ENCODE measurements at regions of chr15 and their contacts with region 1.

Region 1: DNA sequence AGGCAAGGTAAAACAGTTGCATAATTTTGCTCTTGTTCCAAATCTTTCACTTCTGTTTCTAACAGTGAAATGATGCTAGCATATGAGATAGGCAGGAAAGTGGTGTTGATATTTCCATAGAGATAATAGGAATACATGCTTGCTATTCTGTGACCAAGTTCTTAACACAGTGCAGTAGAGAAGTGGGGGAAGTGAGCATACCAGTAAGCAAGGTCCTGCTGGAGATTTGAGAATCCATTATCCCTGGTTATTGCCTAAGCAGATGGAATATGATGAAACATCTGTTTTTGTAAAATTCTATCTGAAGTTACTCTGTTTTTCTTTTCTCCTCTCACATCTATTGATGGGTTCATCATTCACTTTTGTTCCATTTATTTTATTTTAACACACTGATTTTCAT is 28.7 kb downstream of the USP8 start:
- DNase-seq: no peak
- H3K4me3 ChIP-seq: no peak overlapping the region
- H3K27ac ChIP-seq: no peak overlapping the region
- H3K4me1 ChIP-seq: no peaks in the 10 kb centered on the region
- H3K27me3 ChIP-seq: no peaks in the 10 kb centered on the region
- CTCF ChIP-seq: no peak
- POLR2A ChIP-seq: no peak

Region 2: GRCh38 chr15:50340416-50340815 is 112.5 kb before region 1 on chr15:
- intact Hi-C with region 1: loop called (anchors 5 kb)
- DNase-seq: no peak
- H3K4me3 ChIP-seq: no peak overlapping the region
- H3K27ac ChIP-seq: no peak overlapping the region
- H3K4me1 ChIP-seq: no peaks in the 10 kb centered on the region
- H3K27me3 ChIP-seq: no peaks in the 10 kb centered on the region
- CTCF ChIP-seq: no peak
- POLR2A ChIP-seq: no peak

Region 3: DNA sequence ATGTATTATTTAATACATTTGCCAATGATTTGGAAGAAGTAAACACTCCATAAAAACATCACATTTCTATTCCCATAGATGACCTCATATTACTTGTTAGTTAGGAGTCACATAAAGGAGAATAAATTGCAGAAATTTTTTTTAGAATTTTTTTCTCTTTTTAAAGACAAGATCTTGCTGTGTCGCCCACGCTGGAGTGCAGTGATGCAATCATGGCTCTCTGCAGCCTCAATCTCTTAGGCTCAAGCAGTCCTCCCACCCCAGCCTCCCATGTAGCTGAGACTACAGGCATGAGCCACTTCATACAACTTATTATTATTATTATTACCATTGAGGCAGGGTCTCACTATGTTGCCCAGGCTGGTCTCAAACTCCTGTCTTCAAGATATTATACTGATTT is 41.1 kb before region 1 on chr15:
- intact Hi-C with region 1: no loop called
- DNase-seq: no peak
- H3K4me3 ChIP-seq: no peak overlapping the region
- H3K27ac ChIP-seq: no peak overlapping the region
- H3K4me1 ChIP-seq: no peaks in the 10 kb centered on the region
- H3K27me3 ChIP-seq: no peaks in the 10 kb centered on the region
- CTCF ChIP-seq: no peak
- POLR2A ChIP-seq: no peak

Region 4: DNA sequence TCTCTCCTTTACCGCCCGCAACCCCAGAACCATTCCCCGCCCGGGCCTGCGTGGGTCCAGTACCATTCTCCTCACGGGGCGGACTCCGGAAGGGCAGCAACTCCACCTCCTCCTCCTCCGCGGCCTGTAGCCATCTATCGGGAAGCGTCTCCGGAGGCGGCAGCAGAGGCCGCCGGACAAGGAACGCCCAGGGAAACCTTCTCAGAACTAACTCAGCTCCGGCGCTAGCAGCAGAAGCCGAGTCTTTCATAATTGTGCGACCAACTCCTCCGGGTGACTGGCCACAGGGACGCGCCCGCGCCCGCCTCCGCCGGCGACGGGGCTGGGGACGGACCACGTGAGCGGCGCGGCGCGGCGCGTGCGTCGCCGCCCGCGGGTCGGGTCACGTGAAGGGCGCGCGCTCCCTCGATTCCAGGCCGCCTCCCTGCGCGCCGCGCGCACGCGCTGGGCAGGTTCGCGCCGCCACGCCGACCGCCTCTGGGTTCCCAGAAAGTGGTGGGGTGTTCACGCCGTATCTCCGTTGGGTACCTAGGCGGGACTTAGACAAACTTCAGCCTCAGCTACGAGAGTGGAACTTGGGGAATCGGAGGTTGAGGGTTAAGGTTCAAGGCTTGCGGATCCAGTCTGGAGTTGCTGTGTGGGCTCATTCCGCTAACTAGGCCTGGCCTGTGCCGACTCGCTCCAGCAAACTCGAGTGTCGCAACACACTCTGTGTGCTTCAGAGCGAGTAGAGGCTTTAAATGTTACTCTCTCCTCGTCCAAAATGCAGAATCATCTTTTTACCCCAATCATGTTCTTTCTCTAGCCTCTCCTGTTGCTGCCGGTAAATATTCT is 233.8 kb after region 1 on chr15 and contains the start of gene TRPM7:
- intact Hi-C with region 1: no loop called
- DNase-seq: peak; percentile 81 to 88
- H3K4me3 ChIP-seq: peak within 1 kb of the TSS; percentile 72 to 87
- H3K27ac ChIP-seq: peak within 1 kb of the TSS; percentile 96 to 98
- H3K4me1 ChIP-seq: peaks cover 0 to 9% of the 10 kb centered on the region in 2 donors
- H3K27me3 ChIP-seq: no peaks in the 10 kb centered on the region
- CTCF ChIP-seq: peak in 3 of 4 experiments; percentile 4 to 13 (median 11)
- POLR2A ChIP-seq: peak; percentile 61 to 79
- total RNA-seq, gene TRPM7: 46.2 to 755 (median 83.5) TPM